Right ventricle myocardium inferior (tissue), 1 donor: ENCODE measurements at regions of chr1 and their contacts with region 1.

Region 1: GRCh38 chr1:27542408-27543273 is 52.7 kb upstream of the WASF2 start:
- DNase-seq: peak; percentile 75
- ATAC-seq: peak; percentile 53

Region 2: GRCh38 chr1:26826261-26827105 is 716.2 kb before region 1 on chr1 and contains the start of gene ZDHHC18:
- intact Hi-C with region 1: no loop called
- DNase-seq: peak; percentile 91
- ATAC-seq: peak; percentile 81
- total RNA-seq, gene ZDHHC18: 17.7 TPM

Region 3: DNA sequence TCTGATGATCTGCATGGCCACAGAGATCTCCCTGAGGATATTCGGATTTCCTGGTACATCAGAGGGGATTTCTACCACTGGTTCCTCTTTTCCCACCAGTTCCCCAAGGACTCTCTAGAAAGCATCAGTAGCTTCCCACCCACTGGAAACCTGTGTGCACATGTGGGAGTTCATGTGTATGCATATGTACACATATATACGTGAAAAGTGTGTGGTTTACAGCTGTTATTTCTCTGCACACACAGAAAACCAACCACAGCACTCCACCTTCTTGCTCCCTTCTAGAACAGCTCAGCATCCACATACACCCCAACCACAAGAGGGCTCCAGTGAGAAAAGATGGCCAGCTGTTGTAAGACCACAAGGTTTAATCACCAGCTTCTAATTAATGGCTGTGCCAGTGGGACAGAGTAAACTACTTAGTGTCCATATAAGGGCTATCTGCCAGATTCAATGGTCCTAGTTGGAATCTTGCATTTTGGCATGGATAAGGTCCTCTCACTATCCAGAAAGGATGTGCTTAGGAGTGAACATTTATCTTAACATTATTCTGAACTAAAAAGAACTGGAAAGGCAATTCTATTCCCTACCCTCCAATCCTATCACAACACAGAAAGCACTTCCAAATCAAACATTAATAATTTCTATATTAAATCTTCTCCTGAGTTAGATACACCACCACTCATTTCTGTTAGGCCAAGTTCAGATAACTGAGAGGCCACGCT is 126.1 kb before region 1 on chr1:
- intact Hi-C with region 1: loop called (anchors 5 kb)
- DNase-seq: no peak
- ATAC-seq: no peak